PC-3 (cell line): ENCODE measurements at regions of chr12 and their contacts with region 1.

Region 1: DNA sequence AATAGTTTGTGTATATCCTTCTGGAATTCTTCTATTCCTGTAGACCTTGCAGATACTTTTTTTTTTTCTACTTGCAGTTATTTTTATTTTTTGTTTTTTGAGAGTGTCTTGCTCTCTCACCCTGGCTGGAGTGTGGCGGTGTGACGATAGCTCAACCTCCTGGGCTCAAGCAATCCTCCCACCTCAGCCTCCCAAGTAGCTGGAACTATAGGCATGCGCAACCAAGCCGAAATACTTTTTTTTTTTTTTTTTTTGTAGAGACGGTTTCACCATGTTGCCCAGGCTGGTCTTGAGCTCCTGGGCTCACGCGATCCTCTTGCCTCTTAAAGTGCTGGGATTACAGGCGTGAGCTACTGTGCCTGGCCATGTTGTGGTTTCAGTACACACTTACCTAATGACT is 10.0 kb downstream of the TULP3 start:
- DNase-seq: no peak
- ATAC-seq: no peak
- H3K4me3 ChIP-seq: no peak overlapping the region
- H3K27ac ChIP-seq: no peak overlapping the region
- H3K4me1 ChIP-seq: no peaks in the 10 kb centered on the region
- H3K27me3 ChIP-seq: no peaks in the 10 kb centered on the region
- CTCF ChIP-seq: no peak

Region 2: DNA sequence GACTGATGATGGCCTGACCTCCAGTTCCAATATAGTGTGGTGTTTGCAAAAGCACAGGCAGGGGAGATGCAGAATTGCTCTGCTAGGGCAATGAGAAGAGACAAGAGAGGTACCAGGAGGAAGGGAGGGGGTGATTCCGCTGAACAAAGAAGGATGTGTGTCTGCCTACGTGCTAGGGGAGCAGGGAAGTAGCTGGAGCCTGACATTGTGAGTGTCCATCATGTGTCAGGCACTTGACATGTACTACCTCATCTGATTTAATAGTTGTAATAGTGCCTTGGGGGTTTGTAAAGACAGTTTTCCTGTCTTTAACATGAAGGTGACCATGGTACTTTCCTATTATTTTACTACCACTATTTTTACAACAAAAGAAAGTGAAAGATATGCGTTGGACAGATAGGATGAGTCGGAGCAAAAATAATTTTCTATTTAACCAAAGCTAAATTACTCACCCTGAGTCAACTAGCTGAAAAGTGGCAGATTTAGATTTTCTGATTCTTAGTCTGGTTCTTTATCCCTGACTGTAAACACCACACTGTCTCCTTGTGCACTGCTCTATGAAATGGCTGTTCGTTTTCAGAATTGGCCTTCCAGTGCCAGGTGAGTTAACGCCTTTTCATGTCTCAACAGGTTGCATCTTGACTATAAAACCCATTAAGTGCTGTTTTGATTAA is 24.8 kb after region 1 on chr12:
- CTCF ChIA-PET with region 1: no interaction called
- POLR2A ChIA-PET with region 1: interaction called, 20 read pairs
- intact Hi-C with region 1: no loop called
- DNase-seq: peak; percentile 40
- ATAC-seq: peak; percentile 69
- H3K4me3 ChIP-seq: 0 out of 2 replicates have a peak overlapping the region, but pooled peaks have one; percentile 14
- H3K27ac ChIP-seq: peak overlapping the region; percentile 37; the same call in 1 of the 2 replicates
- H3K4me1 ChIP-seq: peaks cover 9% of the 10 kb centered on the region
- H3K27me3 ChIP-seq: no peaks in the 10 kb centered on the region
- CTCF ChIP-seq: no peak